CD8-positive, alpha-beta T cell (primary cell): ENCODE measurements at regions of chr4 and their contacts with region 1.

Region 1: GRCh38 chr4:80036949-80037685 is 35.9 kb downstream of the ANTXR2 start:
- DNase-seq: no peak
- ATAC-seq: no peak
- H3K4me3 ChIP-seq: no peak overlapping the region
- H3K4me3 Mint-ChIP-seq: peak overlapping the region; percentile 24
- H3K27ac ChIP-seq: peak overlapping the region in 1 of 2 experiments; percentile 50
- H3K27ac Mint-ChIP-seq: peak overlapping the region; percentile 86
- H3K4me1 ChIP-seq: peaks cover 5% of the 10 kb centered on the region
- H3K4me1 Mint-ChIP-seq: peaks cover 25% of the 10 kb centered on the region
- H3K27me3 ChIP-seq: no peaks in the 10 kb centered on the region
- H3K27me3 Mint-ChIP-seq: no peaks in the 10 kb centered on the region
- CTCF ChIP-seq: no peak

Region 2: DNA sequence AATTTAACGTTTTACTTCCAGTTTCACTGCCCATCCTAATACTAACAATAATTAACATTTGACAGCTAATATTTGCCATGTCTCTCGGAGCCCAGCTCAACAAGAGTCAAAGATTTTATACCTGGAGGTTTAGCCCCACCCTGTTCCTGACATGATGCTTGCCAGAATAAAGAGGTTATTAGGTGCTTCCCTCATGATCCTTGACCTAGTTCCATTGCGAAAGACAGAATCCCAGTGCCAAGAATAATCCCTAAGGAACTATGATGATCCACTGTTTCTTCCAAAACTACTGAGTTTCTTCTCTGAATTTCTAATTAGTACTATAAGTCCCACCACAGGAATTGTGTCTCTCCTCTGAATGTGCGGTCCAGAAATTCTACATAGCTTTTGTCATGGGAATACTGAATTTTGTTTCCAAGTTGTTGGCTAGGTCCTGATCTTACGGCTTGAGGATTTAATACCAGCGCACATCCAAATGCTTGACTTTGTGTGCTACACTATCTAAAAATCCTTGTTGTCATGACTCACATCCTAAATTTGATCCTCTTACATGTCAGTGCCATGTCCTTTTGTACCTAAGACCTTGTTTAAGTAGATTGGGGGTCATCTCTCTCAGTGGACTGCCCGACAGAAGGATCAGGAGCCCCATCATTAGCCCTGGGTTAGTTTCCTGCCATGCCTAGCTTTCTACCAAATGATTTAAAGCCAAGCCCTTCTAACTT is 12.9 kb after region 1 on chr4:
- CTCF ChIA-PET with region 1: no interaction called
- POLR2A ChIA-PET with region 1: no interaction called
- intact Hi-C with region 1: loop called in 1 of 2 experiments (anchors 2 kb)
- DNase-seq: no peak
- ATAC-seq: no peak
- H3K4me3 ChIP-seq: no peak overlapping the region
- H3K4me3 Mint-ChIP-seq: no peak overlapping the region
- H3K27ac ChIP-seq: no peak overlapping the region
- H3K27ac Mint-ChIP-seq: no peak overlapping the region
- H3K4me1 ChIP-seq: no peaks in the 10 kb centered on the region
- H3K4me1 Mint-ChIP-seq: no peaks in the 10 kb centered on the region
- H3K27me3 ChIP-seq: no peaks in the 10 kb centered on the region
- H3K27me3 Mint-ChIP-seq: no peaks in the 10 kb centered on the region
- CTCF ChIP-seq: no peak